Posterior cingulate gyrus (tissue), 11 donors: ENCODE measurements at regions of chr5 and their contacts with region 1.

Region 1: GRCh38 chr5:87541033-87541432 is 128.3 kb upstream of the CCNH start:
- DNase-seq: peak in 9 of 10 donors; percentile 34 to 94 (median 78)

Region 2: GRCh38 chr5:87770601-87771121 is 229.6 kb after region 1 on chr5:
- intact Hi-C with region 1: loop called (anchors 10 kb)
- DNase-seq: peak; percentile 27 to 88 (median 48)

Region 3: GRCh38 chr5:87791869-87792268 is 250.8 kb after region 1 on chr5:
- intact Hi-C with region 1: no loop called
- DNase-seq: no peak